Right ventricle myocardium inferior (tissue), 1 donor: ENCODE measurements at regions of chr6 and their contacts with region 1.

Region 1: DNA sequence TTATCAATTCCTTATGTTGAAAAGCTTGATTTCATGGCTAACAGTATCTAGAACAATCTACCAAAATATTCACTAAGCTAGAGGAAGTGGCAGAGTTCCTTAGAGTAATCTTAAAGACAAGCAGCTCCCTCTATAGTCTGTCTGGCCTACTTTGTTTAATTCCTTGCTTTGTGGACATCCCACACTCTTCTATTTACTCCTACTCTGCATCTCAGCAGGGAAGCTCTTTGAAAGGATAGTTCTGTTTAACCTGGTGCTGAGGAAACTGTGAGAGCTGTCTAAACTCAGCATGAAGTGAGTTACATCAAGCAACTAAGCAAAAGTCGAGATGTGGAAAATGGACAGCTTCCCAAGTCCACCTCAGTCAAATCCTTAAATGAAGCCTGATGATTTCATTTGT is 4.3 kb downstream of the REV3L start:
- DNase-seq: no peak
- ATAC-seq: no peak

Region 2: DNA sequence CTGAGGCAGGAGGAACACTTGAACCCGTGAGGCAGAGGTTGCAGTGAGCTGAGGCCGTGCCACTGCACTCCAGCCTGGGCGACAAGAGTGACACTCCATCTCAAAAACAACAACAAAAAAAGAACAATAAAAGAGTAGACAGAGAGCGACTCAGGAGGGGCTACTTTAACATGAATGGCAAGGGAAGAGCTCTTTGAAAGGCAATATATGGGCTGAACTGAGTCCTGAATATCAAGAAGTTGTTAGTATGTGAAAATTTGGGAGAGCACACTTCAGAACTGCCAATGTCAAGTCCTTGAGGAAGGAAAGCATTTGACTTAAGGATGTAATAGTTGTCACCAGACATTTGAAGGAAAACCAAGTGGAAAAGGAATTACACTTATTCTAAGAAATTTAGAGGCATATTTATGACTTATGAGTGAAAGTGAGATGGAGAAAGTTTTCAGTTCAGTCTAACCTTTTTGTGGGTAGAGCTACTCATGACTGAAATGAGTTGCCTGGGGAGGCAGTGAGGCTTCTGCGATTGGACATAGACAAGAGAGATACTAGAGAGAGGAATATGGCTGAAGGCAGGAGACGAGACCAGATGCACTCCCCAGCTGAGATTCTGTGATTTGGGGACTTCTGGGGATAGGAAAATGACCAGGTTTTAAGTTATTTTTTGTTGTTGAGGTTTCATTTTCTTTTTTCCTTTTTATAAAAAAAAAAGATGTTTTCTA is 440.1 kb before region 1 on chr6:
- intact Hi-C with region 1: no loop called
- DNase-seq: no peak
- ATAC-seq: no peak

Region 3: GRCh38 chr6:111377558-111378120 is 101.1 kb before region 1 on chr6:
- intact Hi-C with region 1: loop called (anchors 10 kb)
- DNase-seq: no peak
- ATAC-seq: no peak

Region 4: DNA sequence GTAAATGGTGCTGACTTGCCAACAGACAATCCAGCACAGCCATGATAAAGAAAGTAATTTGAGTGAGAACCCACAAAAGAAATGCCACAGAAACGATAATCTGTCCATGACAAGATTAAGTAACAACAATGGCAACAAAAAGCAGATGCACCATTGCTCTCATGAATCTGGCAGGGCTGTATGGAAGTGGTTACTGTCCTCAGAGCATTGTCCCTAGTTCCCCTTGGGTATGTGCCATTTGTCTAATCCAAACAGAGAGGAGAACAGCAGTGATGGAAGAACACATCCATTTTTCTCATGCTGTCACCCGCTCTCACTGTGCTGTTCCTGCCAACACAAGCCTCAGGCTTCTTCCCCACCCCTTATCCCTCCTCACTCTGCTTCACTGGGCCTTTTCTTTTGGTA is 61.6 kb before region 1 on chr6:
- intact Hi-C with region 1: loop called (anchors 10 kb)
- DNase-seq: no peak
- ATAC-seq: peak; percentile 91

Region 5: DNA sequence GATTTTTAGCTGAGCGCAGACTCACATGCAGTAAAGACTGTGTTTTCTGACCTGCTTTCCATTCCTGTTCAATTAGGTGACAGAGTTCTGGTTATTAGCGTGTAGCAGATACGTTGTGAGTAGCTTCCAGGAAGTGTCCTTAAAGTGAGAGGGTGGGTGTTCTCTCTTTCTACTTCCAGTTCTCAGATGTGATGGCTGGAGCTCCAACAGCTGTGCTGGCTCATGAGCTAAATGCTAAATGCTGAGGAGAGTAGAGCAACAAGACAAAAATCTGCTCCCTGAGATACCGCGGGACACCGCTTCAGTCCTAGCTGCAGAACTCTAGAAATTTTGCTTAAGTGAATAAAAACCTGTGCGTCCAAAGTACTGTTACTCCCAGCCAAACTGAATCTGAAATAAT is 432.7 kb after region 1 on chr6:
- intact Hi-C with region 1: no loop called
- DNase-seq: no peak
- ATAC-seq: no peak